HepG2 (cell line): ENCODE measurements at regions of chr17 and their contacts with region 1.

Region 1: DNA sequence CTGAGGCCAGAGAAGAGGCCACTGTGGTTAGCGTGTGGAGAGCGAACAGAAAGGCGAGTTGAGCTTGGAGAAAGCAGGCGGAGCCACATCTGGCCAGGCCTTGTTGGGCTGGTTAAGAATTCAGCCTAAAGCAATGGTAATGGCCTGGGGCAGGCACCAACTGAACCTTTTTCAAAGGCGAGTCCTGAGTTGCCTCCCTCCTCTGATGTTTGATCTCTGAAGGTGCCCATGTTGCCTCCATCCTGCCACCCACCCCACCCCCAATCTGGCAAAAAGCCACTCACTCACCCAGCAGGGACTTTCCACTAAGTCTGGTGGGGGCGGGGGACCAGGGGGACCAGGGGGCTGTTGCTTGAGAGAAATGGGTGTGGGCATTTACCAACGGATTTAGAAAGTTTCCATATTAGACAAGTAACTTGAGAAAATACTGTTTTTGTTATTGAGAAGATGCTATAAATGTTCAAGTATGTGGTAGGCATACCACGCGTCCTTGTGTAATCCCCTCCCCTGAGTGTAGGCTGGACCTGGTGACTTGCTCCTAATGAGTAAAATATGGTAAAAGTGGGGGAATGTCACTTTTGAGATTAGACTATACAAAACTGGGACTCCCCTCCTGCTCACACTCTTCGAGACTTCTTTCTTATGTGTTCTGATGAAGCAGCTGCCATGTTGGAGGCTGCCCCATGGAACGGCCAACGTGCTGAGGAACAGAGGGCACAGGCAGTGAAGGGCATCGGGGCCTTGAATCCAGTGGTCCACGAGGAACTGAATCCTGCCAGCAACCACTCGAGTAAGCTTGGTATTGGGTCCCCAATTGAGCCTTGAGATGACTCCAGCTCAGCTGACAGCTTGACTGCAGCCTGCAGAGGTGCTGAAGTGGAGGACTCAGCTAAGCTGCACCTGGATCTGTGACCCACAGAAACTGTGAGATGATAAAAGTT is 29.9 kb upstream of the TNS4 start:
- DNase-seq: no peak
- ATAC-seq: no peak
- H3K4me3 ChIP-seq: no peak overlapping the region
- H3K27ac ChIP-seq: no peak overlapping the region
- H3K4me1 ChIP-seq: peaks cover 30% of the 10 kb centered on the region
- H3K27me3 ChIP-seq: no peaks in the 10 kb centered on the region
- CTCF ChIP-seq: no peak
- EP300 ChIP-seq: no peak
- POLR2A ChIP-seq: no peak
- RAD21 ChIP-seq: no peak

Region 2: DNA sequence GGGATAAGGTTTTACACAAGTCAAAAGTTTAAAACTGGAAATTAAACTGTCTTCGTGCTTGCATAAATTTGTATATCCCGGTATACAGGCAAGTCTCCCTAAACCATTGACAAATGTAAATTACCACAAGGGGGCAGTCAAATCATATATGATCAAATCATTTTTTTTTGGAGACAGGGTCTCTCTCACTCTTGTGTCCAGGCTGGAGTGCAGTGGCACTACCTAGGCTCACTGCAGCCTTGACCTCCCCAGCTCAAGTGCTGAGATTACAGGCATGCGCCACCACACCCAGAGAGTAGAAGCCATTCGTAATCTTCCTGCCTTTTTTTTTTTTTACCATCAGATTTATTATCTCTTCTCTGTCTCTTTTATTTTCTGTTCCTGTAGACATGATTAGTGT is 132.1 kb before region 1 on chr17:
- CTCF ChIA-PET with region 1: interaction called, 33 read pairs
- POLR2A ChIA-PET with region 1: no interaction called
- in situ Hi-C with region 1: no loop called
- intact Hi-C with region 1: loop called (anchors 1 kb)
- DNase-seq: peak; percentile 74
- ATAC-seq: peak; percentile 71
- H3K4me3 ChIP-seq: no peak overlapping the region
- H3K27ac ChIP-seq: no peak overlapping the region
- H3K4me1 ChIP-seq: no peaks in the 10 kb centered on the region
- H3K27me3 ChIP-seq: no peaks in the 10 kb centered on the region
- CTCF ChIP-seq: peak; percentile 51
- EP300 ChIP-seq: no peak
- POLR2A ChIP-seq: no peak
- RAD21 ChIP-seq: peak; percentile 55; the same call in 1 of the 2 replicates

Region 3: GRCh38 chr17:40443583-40444327 is 87.6 kb before region 1 on chr17:
- CTCF ChIA-PET with region 1: interaction called, 29 read pairs
- POLR2A ChIA-PET with region 1: interaction called, 10 read pairs
- in situ Hi-C with region 1: loop called (anchors 5 kb)
- intact Hi-C with region 1: loop called (anchors 1 kb)
- DNase-seq: peak; percentile 69
- ATAC-seq: peak; percentile 68
- H3K4me3 ChIP-seq: peak overlapping the region; percentile 38 to 81 (median 67)
- H3K27ac ChIP-seq: no peak overlapping the region
- H3K4me1 ChIP-seq: peaks cover 58% of the 10 kb centered on the region
- H3K27me3 ChIP-seq: peaks cover 1 to 6% of the 10 kb centered on the region in 2 experiments; a peak in 3 of 5 replicates
- CTCF ChIP-seq: peak; percentile 92
- EP300 ChIP-seq: no peak
- POLR2A ChIP-seq: no peak
- RAD21 ChIP-seq: peak; percentile 87

Region 4: GRCh38 chr17:40450175-40450574 is 81.1 kb before region 1 on chr17:
- CTCF ChIA-PET with region 1: no interaction called
- POLR2A ChIA-PET with region 1: interaction called, 10 read pairs
- in situ Hi-C with region 1: no loop called
- intact Hi-C with region 1: no loop called
- DNase-seq: peak; percentile 54
- ATAC-seq: no peak
- H3K4me3 ChIP-seq: no peak overlapping the region
- H3K27ac ChIP-seq: no peak overlapping the region
- H3K4me1 ChIP-seq: peaks cover 51% of the 10 kb centered on the region
- H3K27me3 ChIP-seq: no peaks in the 10 kb centered on the region
- CTCF ChIP-seq: peak; percentile 72
- EP300 ChIP-seq: no peak
- POLR2A ChIP-seq: no peak
- RAD21 ChIP-seq: peak; percentile 30; the same call in 1 of the 2 replicates

Region 5: DNA sequence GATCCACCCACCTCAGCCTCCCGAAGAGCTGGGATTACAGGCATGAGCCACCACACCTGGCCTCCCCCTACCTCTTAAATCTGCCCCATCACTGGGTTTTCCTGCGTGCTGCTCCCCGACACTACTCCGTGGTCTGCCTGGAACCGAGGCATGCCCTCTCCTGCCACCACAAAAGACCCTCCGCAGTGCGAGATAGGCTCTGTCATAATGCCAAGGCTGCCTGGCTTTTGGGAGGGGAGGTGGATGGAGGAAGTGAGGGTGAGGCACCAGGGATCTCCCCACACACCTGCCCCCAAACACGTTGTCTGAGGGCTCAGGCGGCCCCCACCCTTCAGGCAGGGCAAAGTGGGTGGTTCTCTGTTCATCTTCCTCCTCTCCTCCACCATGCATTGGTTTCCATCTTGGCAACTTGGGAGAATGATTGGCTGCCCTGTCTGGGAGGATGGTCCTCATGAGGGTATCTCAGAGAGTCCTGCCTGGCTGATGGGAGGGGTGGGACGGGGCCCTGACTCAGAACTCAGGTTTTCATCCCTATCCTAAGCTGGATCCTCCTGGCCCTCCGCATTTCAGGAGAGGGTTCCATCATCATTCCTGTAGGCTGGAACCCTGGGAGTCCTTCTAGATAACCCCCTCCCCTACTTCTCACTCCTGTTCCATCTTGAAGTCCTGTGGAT is 64.9 kb before region 1 on chr17:
- CTCF ChIA-PET with region 1: no interaction called
- POLR2A ChIA-PET with region 1: no interaction called
- in situ Hi-C with region 1: no loop called
- intact Hi-C with region 1: no loop called
- DNase-seq: no peak
- ATAC-seq: no peak
- H3K4me3 ChIP-seq: no peak overlapping the region
- H3K27ac ChIP-seq: no peak overlapping the region
- H3K4me1 ChIP-seq: peaks cover 36% of the 10 kb centered on the region
- H3K27me3 ChIP-seq: peaks cover 3 to 28% of the 10 kb centered on the region in 2 experiments
- CTCF ChIP-seq: no peak
- EP300 ChIP-seq: no peak
- POLR2A ChIP-seq: no peak
- RAD21 ChIP-seq: no peak

Region 6: DNA sequence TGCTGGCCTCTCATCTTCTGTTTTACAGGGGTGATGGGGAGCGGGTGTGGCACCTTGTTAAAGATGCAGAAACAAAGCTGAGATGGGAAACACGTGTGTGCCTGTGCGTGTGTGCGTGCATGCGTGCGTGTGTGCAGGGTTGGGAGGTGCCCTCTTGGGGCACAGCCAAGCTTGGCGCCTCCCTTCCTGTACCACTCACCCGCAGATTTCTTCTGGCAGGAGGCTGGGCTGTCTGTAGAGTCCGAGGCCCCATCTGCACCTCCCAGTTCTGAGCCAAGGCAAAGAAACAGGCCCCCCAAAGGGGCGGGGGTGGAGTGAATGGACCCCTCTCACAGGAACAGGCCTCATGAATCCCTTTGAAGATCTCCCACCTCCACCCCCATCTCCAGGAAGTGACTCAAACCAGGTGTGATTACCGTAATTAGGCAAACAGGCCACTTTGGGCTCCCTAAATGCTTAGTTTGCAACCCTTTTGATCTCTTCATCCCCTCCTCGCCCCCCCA is 50.8 kb before region 1 on chr17:
- CTCF ChIA-PET with region 1: interaction called, 7 read pairs
- POLR2A ChIA-PET with region 1: interaction called, 4 read pairs
- in situ Hi-C with region 1: no loop called
- intact Hi-C with region 1: loop called (anchors 5 kb)
- DNase-seq: peak; percentile 68
- ATAC-seq: peak; percentile 11; the same call in 1 of the 3 replicates
- H3K4me3 ChIP-seq: no peak overlapping the region
- H3K27ac ChIP-seq: no peak overlapping the region
- H3K4me1 ChIP-seq: peaks cover 52% of the 10 kb centered on the region
- H3K27me3 ChIP-seq: no peaks in the 10 kb centered on the region
- CTCF ChIP-seq: no peak
- EP300 ChIP-seq: peak in 1 of 2 experiments; percentile 64; a peak in 1 of 4 replicates
- POLR2A ChIP-seq: no peak
- RAD21 ChIP-seq: no peak

Region 7: GRCh38 chr17:40559954-40560591 is 28.8 kb after region 1 on chr17:
- CTCF ChIA-PET with region 1: interaction called, 57 read pairs
- POLR2A ChIA-PET with region 1: interaction called, 116 read pairs
- in situ Hi-C with region 1: no loop called
- intact Hi-C with region 1: loop called (anchors 1 kb)
- DNase-seq: peak; percentile 90
- ATAC-seq: peak; percentile 87
- H3K4me3 ChIP-seq: peak overlapping the region; percentile 22 to 67 (median 41); a peak in 5 of 6 replicates
- H3K27ac ChIP-seq: no peak overlapping the region
- H3K4me1 ChIP-seq: peaks cover 59% of the 10 kb centered on the region
- H3K27me3 ChIP-seq: peaks cover 3 to 41% of the 10 kb centered on the region in 2 experiments; a peak in 2 of 5 replicates
- CTCF ChIP-seq: peak; percentile 100
- EP300 ChIP-seq: peak in 1 of 2 experiments; percentile 45; a peak in 2 of 4 replicates
- POLR2A ChIP-seq: no peak
- RAD21 ChIP-seq: peak; percentile 100